Activated CD8-positive, alpha-beta T cell treated with anti-CD3 and anti-CD28 coated beads for 36 hours (primary cell): ENCODE measurements at regions of chr11 and their contacts with region 1.

Region 1: GRCh38 chr11:121591405-121592033 is 138.8 kb upstream of the SORL1-AS1 start:
- DNase-seq: peak; percentile 80
- ATAC-seq: peak; percentile 72
- H3K4me3 Mint-ChIP-seq: no peak overlapping the region
- H3K27ac Mint-ChIP-seq: peak overlapping the region; percentile 82
- H3K4me1 Mint-ChIP-seq: peaks cover 25% of the 10 kb centered on the region
- H3K27me3 Mint-ChIP-seq: no peaks in the 10 kb centered on the region
- CTCF ChIP-seq: peak; percentile 84

Region 2: GRCh38 chr11:121249039-121249663 is 342.4 kb before region 1 on chr11:
- CTCF ChIA-PET with region 1: interaction called, 13 read pairs
- POLR2A ChIA-PET with region 1: no interaction called
- intact Hi-C with region 1: loop called (anchors 1 kb)
- DNase-seq: peak; percentile 9
- ATAC-seq: peak; percentile 70
- H3K4me3 Mint-ChIP-seq: no peak overlapping the region
- H3K27ac Mint-ChIP-seq: no peak overlapping the region
- H3K4me1 Mint-ChIP-seq: peaks cover 5% of the 10 kb centered on the region
- H3K27me3 Mint-ChIP-seq: peaks cover 4% of the 10 kb centered on the region
- CTCF ChIP-seq: peak; percentile 86

Region 3: GRCh38 chr11:121292495-121293287 is 298.8 kb before region 1 on chr11 and contains the start of gene SC5D:
- CTCF ChIA-PET with region 1: interaction called, 10 read pairs
- POLR2A ChIA-PET with region 1: no interaction called
- intact Hi-C with region 1: no loop called
- DNase-seq: peak; percentile 95
- ATAC-seq: peak; percentile 93
- H3K4me3 Mint-ChIP-seq: peak within 1 kb of the TSS; percentile 91
- H3K27ac Mint-ChIP-seq: peak within 1 kb of the TSS; percentile 94
- H3K4me1 Mint-ChIP-seq: peaks cover 38% of the 10 kb centered on the region
- H3K27me3 Mint-ChIP-seq: no peaks in the 10 kb centered on the region
- CTCF ChIP-seq: no peak
- total RNA-seq, gene SC5D: 18.2 to 20.5 TPM

Region 4: GRCh38 chr11:121318848-121319834 is 272.4 kb before region 1 on chr11:
- CTCF ChIA-PET with region 1: interaction called, 19 read pairs
- POLR2A ChIA-PET with region 1: no interaction called
- intact Hi-C with region 1: loop called (anchors 1 kb)
- DNase-seq: peak; percentile 31
- ATAC-seq: peak; percentile 68
- H3K4me3 Mint-ChIP-seq: no peak overlapping the region
- H3K27ac Mint-ChIP-seq: no peak overlapping the region
- H3K4me1 Mint-ChIP-seq: peaks cover 20% of the 10 kb centered on the region
- H3K27me3 Mint-ChIP-seq: no peaks in the 10 kb centered on the region
- CTCF ChIP-seq: peak; percentile 77

Region 5: DNA sequence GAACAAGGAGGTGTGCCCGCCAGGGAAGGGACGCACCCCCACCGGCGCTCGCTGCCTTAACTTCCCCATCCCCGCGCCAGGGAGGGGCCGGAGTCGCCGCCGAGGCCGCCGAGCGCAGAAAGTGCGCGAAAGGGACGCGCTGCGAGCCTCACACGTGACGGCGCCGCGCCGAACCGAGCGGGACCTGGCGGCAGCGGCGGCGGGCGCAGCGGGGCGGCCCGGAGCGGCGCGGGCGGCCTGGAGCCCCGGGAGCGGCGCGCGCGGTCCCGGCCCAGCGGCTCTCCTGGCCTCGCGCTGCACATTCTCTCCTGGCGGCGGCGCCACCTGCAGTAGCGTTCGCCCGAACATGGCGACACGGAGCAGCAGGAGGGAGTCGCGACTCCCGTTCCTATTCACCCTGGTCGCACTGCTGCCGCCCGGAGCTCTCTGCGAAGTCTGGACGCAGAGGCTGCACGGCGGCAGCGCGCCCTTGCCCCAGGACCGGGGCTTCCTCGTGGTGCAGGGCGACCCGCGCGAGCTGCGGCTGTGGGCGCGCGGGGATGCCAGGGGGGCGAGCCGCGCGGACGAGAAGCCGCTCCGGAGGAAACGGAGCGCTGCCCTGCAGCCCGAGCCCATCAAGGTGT is 139.4 kb before region 1 on chr11 and contains the start of gene SORL1:
- CTCF ChIA-PET with region 1: interaction called, 21 read pairs
- POLR2A ChIA-PET with region 1: no interaction called
- intact Hi-C with region 1: loop called (anchors 5 kb)
- DNase-seq: peak; percentile 84
- ATAC-seq: peak; percentile 66
- H3K4me3 Mint-ChIP-seq: peak within 1 kb of the TSS; percentile 95
- H3K27ac Mint-ChIP-seq: peak within 1 kb of the TSS; percentile 98
- H3K4me1 Mint-ChIP-seq: peaks cover 77% of the 10 kb centered on the region
- H3K27me3 Mint-ChIP-seq: no peaks in the 10 kb centered on the region
- CTCF ChIP-seq: peak; percentile 43
- total RNA-seq, gene SORL1: 61.1 to 64.6 TPM

Region 6: DNA sequence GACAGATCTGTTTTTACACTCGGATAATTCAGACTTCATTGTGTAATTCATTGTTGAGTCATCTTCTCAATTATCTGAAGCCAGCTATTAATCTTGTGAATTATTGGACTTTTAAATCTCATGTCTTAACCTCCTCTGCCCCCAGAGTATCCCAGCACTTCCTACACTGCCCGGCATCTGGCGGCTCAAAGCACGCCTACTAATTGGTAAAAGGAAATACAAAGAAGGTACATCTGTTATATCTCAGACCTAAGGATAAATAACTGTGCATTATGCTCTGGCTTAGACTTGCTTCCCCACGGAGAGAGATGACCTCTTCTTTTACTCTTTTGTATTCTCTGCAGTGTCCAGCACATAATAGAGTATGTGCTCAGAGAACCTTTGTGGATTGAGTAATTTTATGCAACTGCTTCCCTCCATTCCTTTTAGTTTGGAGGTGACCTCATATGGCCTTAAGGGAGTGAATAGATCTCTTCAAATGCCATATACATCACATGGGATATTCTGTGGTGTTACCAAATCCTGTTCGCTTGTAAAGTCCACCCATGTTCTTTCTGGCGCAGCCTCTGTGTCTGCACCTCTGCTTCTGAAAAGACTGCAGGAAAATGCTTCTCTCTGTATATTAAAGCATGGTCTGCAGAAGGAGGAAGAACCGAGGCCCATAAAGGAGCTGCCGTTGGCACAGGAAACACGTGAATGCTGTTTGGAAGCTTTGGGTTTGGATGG is 13.1 kb before region 1 on chr11:
- CTCF ChIA-PET with region 1: interaction called, 24 read pairs
- POLR2A ChIA-PET with region 1: no interaction called
- intact Hi-C with region 1: no loop called
- DNase-seq: no peak
- ATAC-seq: no peak
- H3K4me3 Mint-ChIP-seq: no peak overlapping the region
- H3K27ac Mint-ChIP-seq: no peak overlapping the region
- H3K4me1 Mint-ChIP-seq: peaks cover 27% of the 10 kb centered on the region
- H3K27me3 Mint-ChIP-seq: no peaks in the 10 kb centered on the region
- CTCF ChIP-seq: no peak